HCT116 (cell line): ENCODE measurements at regions of chrX and their contacts with region 1.

Region 1: DNA sequence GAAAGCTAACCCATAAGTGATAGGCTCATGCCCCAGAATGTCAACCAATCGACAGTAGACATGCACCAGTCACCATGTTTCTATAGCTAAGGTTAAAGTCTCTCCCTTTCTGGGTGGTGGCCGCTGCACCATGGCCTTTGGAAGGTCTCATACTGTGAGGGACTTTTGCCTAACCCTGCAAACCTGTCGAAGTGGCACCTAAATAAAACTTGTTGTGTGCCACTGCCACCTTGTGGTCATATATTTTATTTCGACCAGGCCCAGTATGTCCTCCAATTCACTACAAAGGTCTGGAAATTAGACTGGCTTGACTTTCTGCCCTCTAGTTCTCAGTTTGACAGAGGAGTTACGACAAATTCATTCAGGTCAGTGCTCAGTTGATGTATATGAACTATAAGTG is 163.1 kb downstream of the SMARCA1 start:
- DNase-seq: peak; percentile 33
- ATAC-seq: peak; percentile 82
- H3K4me3 ChIP-seq: no peak overlapping the region
- H3K27ac ChIP-seq: no peak overlapping the region
- H3K4me1 ChIP-seq: no peaks in the 10 kb centered on the region
- H3K27me3 ChIP-seq: no peaks in the 10 kb centered on the region
- CTCF ChIP-seq: peak; percentile 31 to 61 (median 36); a peak in 5 of 6 replicates
- POLR2A ChIP-seq: no peak
- RAD21 ChIP-seq: peak; percentile 63

Region 2: GRCh38 chrX:129239371-129239770 is 120.8 kb before region 1 on chrX:
- CTCF ChIA-PET with region 1: no interaction called
- POLR2A ChIA-PET with region 1: no interaction called
- RAD21 ChIA-PET with region 1: no interaction called
- intact Hi-C with region 1: no loop called
- DNase-seq: no peak
- ATAC-seq: no peak
- H3K4me3 ChIP-seq: no peak overlapping the region
- H3K27ac ChIP-seq: no peak overlapping the region
- H3K4me1 ChIP-seq: no peaks in the 10 kb centered on the region
- H3K27me3 ChIP-seq: no peaks in the 10 kb centered on the region
- CTCF ChIP-seq: no peak
- POLR2A ChIP-seq: no peak
- RAD21 ChIP-seq: no peak

Region 3: DNA sequence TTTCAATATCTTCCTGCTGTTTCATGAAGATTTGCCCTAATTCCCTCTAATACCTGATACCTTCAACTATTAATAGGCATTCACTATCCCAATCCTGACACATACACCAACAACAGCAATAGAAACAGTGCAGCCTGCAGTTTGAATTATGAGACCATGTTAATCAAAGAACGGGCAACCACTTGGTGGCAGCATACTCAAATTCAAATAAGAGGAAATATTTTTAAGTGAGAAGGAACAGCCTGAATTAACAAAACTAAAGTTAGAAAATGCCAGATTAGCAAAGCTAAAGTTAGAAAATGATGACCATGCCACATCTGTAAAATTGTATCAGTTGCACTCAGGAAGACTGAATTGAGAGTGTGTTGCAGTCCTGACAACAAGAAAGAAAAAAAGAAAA is 41.8 kb before region 1 on chrX:
- CTCF ChIA-PET with region 1: no interaction called
- POLR2A ChIA-PET with region 1: no interaction called
- RAD21 ChIA-PET with region 1: no interaction called
- intact Hi-C with region 1: loop called (anchors 1 kb)
- DNase-seq: peak; percentile 15
- ATAC-seq: no peak
- H3K4me3 ChIP-seq: no peak overlapping the region
- H3K27ac ChIP-seq: no peak overlapping the region
- H3K4me1 ChIP-seq: no peaks in the 10 kb centered on the region
- H3K27me3 ChIP-seq: no peaks in the 10 kb centered on the region
- CTCF ChIP-seq: peak; percentile 19 to 47 (median 35); a peak in 4 of 6 replicates
- POLR2A ChIP-seq: no peak
- RAD21 ChIP-seq: peak; percentile 56

Region 4: GRCh38 chrX:129632443-129632842 is 272.3 kb after region 1 on chrX:
- CTCF ChIA-PET with region 1: no interaction called
- POLR2A ChIA-PET with region 1: no interaction called
- RAD21 ChIA-PET with region 1: no interaction called
- intact Hi-C with region 1: no loop called
- DNase-seq: no peak
- ATAC-seq: no peak
- H3K4me3 ChIP-seq: no peak overlapping the region
- H3K27ac ChIP-seq: no peak overlapping the region
- H3K4me1 ChIP-seq: peaks cover 0 to 3% of the 10 kb centered on the region in 2 experiments; a peak in 1 of 4 replicates
- H3K27me3 ChIP-seq: no peaks in the 10 kb centered on the region
- CTCF ChIP-seq: no peak
- POLR2A ChIP-seq: no peak
- RAD21 ChIP-seq: no peak